ENCODE measurements at regions of chr1 and their contacts with region 1.

Region 1: DNA sequence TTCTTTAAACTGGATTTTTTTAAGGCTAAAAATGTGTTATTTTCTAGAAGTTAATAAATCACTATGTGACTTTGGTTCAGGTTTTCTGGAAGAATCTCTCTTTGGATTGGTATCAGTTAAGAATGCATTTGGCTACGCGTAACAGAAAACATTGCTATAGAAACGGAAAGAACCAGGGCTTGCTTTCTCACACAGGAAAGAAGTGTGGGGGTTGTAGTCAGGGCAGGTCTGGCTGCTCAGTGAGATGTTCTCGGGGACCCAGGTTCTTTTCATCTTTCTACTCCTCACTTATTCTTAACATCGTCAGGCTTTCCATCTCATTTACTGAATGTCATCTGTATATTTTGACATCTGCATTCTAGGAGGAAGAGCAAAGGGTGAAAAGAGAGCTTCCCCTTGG is 191.4 kb downstream of the ZBTB18 start:
- DNase-seq: peak in 5 of 9 donors; percentile 11 to 46 (median 30)
- ATAC-seq: peak; percentile 68
- H3K4me3 ChIP-seq: no peak overlapping the region
- H3K4me3 Mint-ChIP-seq: peak overlapping the region in 2 of 10 donors; percentile 8 to 46
- H3K27ac ChIP-seq: no peak overlapping the region
- H3K27ac Mint-ChIP-seq: peak overlapping the region in 8 of 9 donors; percentile 2 to 80 (median 34)
- H3K4me1 ChIP-seq: peaks cover 0 to 7% of the 10 kb centered on the region in 2 donors
- H3K4me1 Mint-ChIP-seq: peaks cover 13 to 34% (median 31%) of the 10 kb centered on the region in 7 donors
- H3K27me3 ChIP-seq: no peaks in the 10 kb centered on the region
- H3K27me3 Mint-ChIP-seq: peaks cover 0 to 5% (median 0%) of the 10 kb centered on the region in 5 donors

Region 2: GRCh38 chr1:243605604-243606003 is 636.8 kb before region 1 on chr1:
- CTCF ChIA-PET with region 1: no interaction called
- POLR2A ChIA-PET with region 1: no interaction called
- intact Hi-C with region 1: no loop called
- DNase-seq: no peak
- ATAC-seq: no peak
- H3K4me3 ChIP-seq: no peak overlapping the region
- H3K4me3 Mint-ChIP-seq: no peak overlapping the region
- H3K27ac ChIP-seq: no peak overlapping the region
- H3K27ac Mint-ChIP-seq: peak overlapping the region in 2 of 9 donors; percentile 32 to 78
- H3K4me1 ChIP-seq: no peaks in the 10 kb centered on the region
- H3K4me1 Mint-ChIP-seq: peaks cover 0 to 6% (median 3%) of the 10 kb centered on the region in 7 donors
- H3K27me3 ChIP-seq: no peaks in the 10 kb centered on the region
- H3K27me3 Mint-ChIP-seq: no peaks in the 10 kb centered on the region

Region 3: GRCh38 chr1:244137725-244138124 is 104.7 kb before region 1 on chr1:
- CTCF ChIA-PET with region 1: no interaction called
- POLR2A ChIA-PET with region 1: no interaction called
- intact Hi-C with region 1: loop called in 1 of 2 experiments (anchors 10 kb)
- DNase-seq: peak in 1 of 9 donors; percentile 21
- ATAC-seq: peak; percentile 32
- H3K4me3 ChIP-seq: peak overlapping the region; percentile 34
- H3K4me3 Mint-ChIP-seq: peak overlapping the region; percentile 67 to 89 (median 78)
- H3K27ac ChIP-seq: no peak overlapping the region
- H3K27ac Mint-ChIP-seq: no peak overlapping the region
- H3K4me1 ChIP-seq: no peaks in the 10 kb centered on the region
- H3K4me1 Mint-ChIP-seq: peaks cover 9 to 13% (median 12%) of the 10 kb centered on the region in 7 donors
- H3K27me3 ChIP-seq: no peaks in the 10 kb centered on the region
- H3K27me3 Mint-ChIP-seq: peaks cover 0 to 30% (median 12%) of the 10 kb centered on the region in 5 donors

Measured in naive thymus-derived CD4-positive, alpha-beta T cell (primary cell).